ENCODE measurements at regions of chr4 and their contacts with region 1.

Region 1: GRCh38 chr4:81471588-81472288 is at the start of gene RASGEF1B:
- DNase-seq: peak; percentile 96
- ATAC-seq: peak; percentile 85
- H3K4me3 Mint-ChIP-seq: peak within 1 kb of the TSS; percentile 89
- H3K27ac Mint-ChIP-seq: peak within 1 kb of the TSS; percentile 95
- H3K4me1 Mint-ChIP-seq: peaks cover 37% of the 10 kb centered on the region
- H3K27me3 Mint-ChIP-seq: no peaks in the 10 kb centered on the region
- CTCF ChIP-seq: no peak
- total RNA-seq, gene RASGEF1B: 6.1 to 6.2 TPM

Region 2: GRCh38 chr4:81326581-81326980 is 145.2 kb before region 1 on chr4:
- CTCF ChIA-PET with region 1: no interaction called
- POLR2A ChIA-PET with region 1: no interaction called
- intact Hi-C with region 1: no loop called
- DNase-seq: no peak
- ATAC-seq: no peak
- H3K4me3 Mint-ChIP-seq: no peak overlapping the region
- H3K27ac Mint-ChIP-seq: no peak overlapping the region
- H3K4me1 Mint-ChIP-seq: no peaks in the 10 kb centered on the region
- H3K27me3 Mint-ChIP-seq: peaks cover 15% of the 10 kb centered on the region
- CTCF ChIP-seq: no peak

Region 3: DNA sequence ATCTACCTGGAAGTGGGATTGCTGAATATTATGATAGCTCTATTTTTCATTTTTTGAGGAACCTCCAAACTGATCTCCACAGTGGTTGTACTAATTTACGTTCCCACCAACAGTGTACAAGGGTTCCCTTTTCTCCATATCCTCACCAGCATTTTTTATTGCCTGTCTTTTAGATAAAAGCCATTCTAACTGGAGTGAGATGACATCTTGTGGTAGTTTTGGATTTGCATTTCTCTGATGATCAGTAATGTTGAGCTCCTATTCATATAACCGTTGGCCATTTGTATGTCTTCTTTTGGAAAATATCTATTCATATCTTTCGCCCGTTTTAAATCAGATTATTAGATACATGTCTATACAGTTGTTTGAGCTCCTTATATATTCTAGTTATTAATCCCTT is 101.9 kb before region 1 on chr4:
- CTCF ChIA-PET with region 1: no interaction called
- POLR2A ChIA-PET with region 1: no interaction called
- intact Hi-C with region 1: no loop called
- DNase-seq: no peak
- ATAC-seq: no peak
- H3K4me3 Mint-ChIP-seq: no peak overlapping the region
- H3K27ac Mint-ChIP-seq: no peak overlapping the region
- H3K4me1 Mint-ChIP-seq: no peaks in the 10 kb centered on the region
- H3K27me3 Mint-ChIP-seq: peaks cover 9% of the 10 kb centered on the region
- CTCF ChIP-seq: no peak

Region 4: DNA sequence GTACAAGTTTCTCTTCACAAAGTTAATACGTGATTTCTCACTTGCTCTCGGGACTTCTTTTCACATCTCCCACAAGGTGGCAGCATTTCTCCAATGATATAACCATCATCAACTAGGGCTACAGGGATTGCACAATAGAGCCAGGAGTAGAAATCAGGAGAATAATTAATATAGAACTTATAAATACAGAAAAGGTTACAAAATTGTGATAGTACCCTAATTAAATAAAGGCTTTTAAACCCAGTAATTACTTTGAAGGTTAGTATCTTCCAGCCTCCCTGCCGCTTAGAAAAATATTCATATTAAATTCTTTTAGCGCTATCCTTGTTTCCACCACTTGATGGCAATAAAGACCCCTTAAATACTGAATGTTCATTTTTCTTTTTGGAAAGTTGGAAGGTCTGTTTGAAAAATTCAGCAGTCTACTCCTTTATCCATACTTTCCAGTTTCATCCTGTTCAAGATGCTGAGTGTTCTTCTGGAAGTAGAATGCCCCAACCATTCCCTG is 65.8 kb before region 1 on chr4:
- CTCF ChIA-PET with region 1: interaction called, 14 read pairs
- POLR2A ChIA-PET with region 1: no interaction called
- intact Hi-C with region 1: no loop called
- DNase-seq: peak; percentile 37
- ATAC-seq: peak; percentile 78
- H3K4me3 Mint-ChIP-seq: no peak overlapping the region
- H3K27ac Mint-ChIP-seq: no peak overlapping the region
- H3K4me1 Mint-ChIP-seq: peaks cover 3% of the 10 kb centered on the region
- H3K27me3 Mint-ChIP-seq: no peaks in the 10 kb centered on the region
- CTCF ChIP-seq: peak; percentile 98

Region 5: DNA sequence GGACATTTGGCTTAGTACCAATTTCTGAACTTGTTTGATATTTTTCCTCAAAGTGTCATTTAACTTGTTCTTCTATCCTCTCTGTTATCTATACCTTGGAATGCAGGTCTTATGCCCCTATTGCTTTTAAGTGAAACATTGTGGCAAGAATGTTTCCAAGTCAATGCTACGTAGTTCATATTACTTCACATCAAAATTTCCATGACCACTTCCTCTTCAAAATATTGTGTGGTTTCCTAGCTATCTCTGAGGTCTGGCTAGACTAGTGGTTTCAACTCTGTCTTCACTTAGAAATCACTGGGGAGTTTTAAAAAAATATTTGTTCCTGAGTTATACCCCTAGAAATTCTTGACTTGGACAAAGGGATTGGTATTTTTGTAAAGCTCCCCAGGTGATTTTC is 20.2 kb after region 1 on chr4:
- CTCF ChIA-PET with region 1: interaction called, 17 read pairs
- POLR2A ChIA-PET with region 1: interaction called, 7 read pairs
- intact Hi-C with region 1: no loop called
- DNase-seq: no peak
- ATAC-seq: peak; percentile 72
- H3K4me3 Mint-ChIP-seq: no peak overlapping the region
- H3K27ac Mint-ChIP-seq: peak overlapping the region; percentile 93
- H3K4me1 Mint-ChIP-seq: peaks cover 55% of the 10 kb centered on the region
- H3K27me3 Mint-ChIP-seq: no peaks in the 10 kb centered on the region
- CTCF ChIP-seq: no peak

Region 6: GRCh38 chr4:81594490-81595159 is 122.9 kb after region 1 on chr4:
- CTCF ChIA-PET with region 1: interaction called, 13 read pairs
- POLR2A ChIA-PET with region 1: no interaction called
- intact Hi-C with region 1: loop called (anchors 10 kb)
- DNase-seq: no peak
- ATAC-seq: no peak
- H3K4me3 Mint-ChIP-seq: no peak overlapping the region
- H3K27ac Mint-ChIP-seq: no peak overlapping the region
- H3K4me1 Mint-ChIP-seq: peaks cover 13% of the 10 kb centered on the region
- H3K27me3 Mint-ChIP-seq: no peaks in the 10 kb centered on the region
- CTCF ChIP-seq: no peak

Region 7: DNA sequence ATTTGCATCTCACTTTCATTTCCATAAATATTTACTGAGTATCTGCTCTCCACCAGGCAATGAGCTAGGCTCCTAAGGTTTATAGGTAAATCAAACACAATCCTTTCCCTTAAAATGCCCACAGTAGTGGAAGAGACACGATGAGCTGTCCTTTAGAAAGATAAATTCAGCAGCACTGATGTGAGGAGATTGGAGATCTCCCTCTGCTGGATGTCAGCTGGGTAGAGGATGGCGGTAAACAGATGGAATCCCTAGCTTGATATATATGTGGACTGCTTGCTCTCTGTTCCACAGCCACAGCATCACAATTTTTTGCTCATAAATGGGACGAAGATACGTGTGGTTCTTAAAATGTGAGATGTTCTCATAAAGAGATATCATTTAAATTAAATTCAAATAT is 216.3 kb after region 1 on chr4:
- CTCF ChIA-PET with region 1: interaction called, 25 read pairs
- POLR2A ChIA-PET with region 1: no interaction called
- intact Hi-C with region 1: no loop called
- DNase-seq: no peak
- ATAC-seq: no peak
- H3K4me3 Mint-ChIP-seq: no peak overlapping the region
- H3K27ac Mint-ChIP-seq: no peak overlapping the region
- H3K4me1 Mint-ChIP-seq: no peaks in the 10 kb centered on the region
- H3K27me3 Mint-ChIP-seq: no peaks in the 10 kb centered on the region
- CTCF ChIP-seq: no peak

Region 8: DNA sequence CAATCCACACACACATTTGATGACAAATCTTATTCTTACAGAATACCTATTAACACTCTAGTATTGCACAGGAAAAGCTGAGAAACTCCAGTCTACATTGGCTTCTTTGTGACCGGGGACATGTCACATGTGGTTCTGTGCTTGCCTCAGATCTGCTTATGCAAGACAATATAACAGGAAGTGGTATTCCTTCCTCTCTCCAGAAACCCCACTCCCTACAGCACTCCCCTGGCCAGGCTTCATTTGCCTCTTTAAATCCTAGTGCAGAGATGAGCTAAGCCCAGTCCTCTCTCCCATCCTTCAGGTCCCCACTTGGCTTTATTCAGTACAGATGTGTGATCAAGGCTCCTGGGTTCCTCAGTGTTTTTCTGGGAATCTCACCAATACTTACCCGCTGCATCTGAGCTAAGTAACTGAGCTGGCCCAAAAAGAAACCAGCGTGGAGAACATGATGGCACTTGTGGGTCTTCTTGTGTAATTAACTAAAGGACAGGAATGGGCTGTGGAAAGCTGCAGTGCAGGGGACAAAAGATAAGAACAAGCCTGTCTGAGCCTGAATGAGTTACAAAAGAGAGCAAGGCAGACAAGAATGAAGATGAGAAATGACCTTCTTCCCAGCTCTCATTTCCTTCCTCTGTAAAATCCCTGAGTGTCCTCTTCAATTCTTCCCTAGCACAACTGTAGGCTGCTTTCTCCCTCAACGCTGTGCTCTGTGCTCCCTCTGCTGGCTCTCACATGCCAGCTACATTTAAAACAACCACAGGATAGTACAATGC is 796.5 kb after region 1 on chr4:
- CTCF ChIA-PET with region 1: interaction called, 11 read pairs
- POLR2A ChIA-PET with region 1: no interaction called
- intact Hi-C with region 1: no loop called
- DNase-seq: peak; percentile 63
- ATAC-seq: peak; percentile 86
- H3K4me3 Mint-ChIP-seq: no peak overlapping the region
- H3K27ac Mint-ChIP-seq: no peak overlapping the region
- H3K4me1 Mint-ChIP-seq: peaks cover 10% of the 10 kb centered on the region
- H3K27me3 Mint-ChIP-seq: no peaks in the 10 kb centered on the region
- CTCF ChIP-seq: peak; percentile 79

Measured in activated CD8-positive, alpha-beta T cell treated with anti-CD3 and anti-CD28 coated beads for 36 hours (primary cell).